ENCODE measurements at regions of chr6 and their contacts with region 1.

Region 1: GRCh38 chr6:17971128-17972073 is 16.0 kb downstream of the KIF13A start:
- DNase-seq: no peak
- ATAC-seq: no peak
- H3K4me3 ChIP-seq: no peak overlapping the region
- H3K27ac ChIP-seq: peak overlapping the region; percentile 6 to 53 (median 22)
- H3K4me1 ChIP-seq: peaks cover 72 to 76% of the 10 kb centered on the region in 2 donors
- H3K27me3 ChIP-seq: no peaks in the 10 kb centered on the region
- CTCF ChIP-seq: no peak
- POLR2A ChIP-seq: no peak

Region 2: GRCh38 chr6:17167327-17167979 is 803.9 kb before region 1 on chr6:
- in situ Hi-C with region 1: no loop called
- intact Hi-C with region 1: no loop called
- DNase-seq: peak; percentile 35 to 81
- ATAC-seq: peak; percentile 43 to 75
- H3K4me3 ChIP-seq: no peak overlapping the region
- H3K27ac ChIP-seq: peak overlapping the region; percentile 80 to 92 (median 90)
- H3K4me1 ChIP-seq: peaks cover 26 to 27% of the 10 kb centered on the region in 2 donors
- H3K27me3 ChIP-seq: no peaks in the 10 kb centered on the region
- CTCF ChIP-seq: peak; percentile 51 to 72 (median 60)
- POLR2A ChIP-seq: peak in 1 of 2 donors; percentile 11

Region 3: GRCh38 chr6:17851001-17851719 is 120.2 kb before region 1 on chr6:
- in situ Hi-C with region 1: loop called in 2 of 4 experiments (anchors 10 to 25 kb)
- intact Hi-C with region 1: no loop called
- DNase-seq: no peak
- ATAC-seq: no peak
- H3K4me3 ChIP-seq: no peak overlapping the region
- H3K27ac ChIP-seq: no peak overlapping the region
- H3K4me1 ChIP-seq: no peaks in the 10 kb centered on the region
- H3K27me3 ChIP-seq: no peaks in the 10 kb centered on the region
- CTCF ChIP-seq: no peak
- POLR2A ChIP-seq: no peak

Region 4: DNA sequence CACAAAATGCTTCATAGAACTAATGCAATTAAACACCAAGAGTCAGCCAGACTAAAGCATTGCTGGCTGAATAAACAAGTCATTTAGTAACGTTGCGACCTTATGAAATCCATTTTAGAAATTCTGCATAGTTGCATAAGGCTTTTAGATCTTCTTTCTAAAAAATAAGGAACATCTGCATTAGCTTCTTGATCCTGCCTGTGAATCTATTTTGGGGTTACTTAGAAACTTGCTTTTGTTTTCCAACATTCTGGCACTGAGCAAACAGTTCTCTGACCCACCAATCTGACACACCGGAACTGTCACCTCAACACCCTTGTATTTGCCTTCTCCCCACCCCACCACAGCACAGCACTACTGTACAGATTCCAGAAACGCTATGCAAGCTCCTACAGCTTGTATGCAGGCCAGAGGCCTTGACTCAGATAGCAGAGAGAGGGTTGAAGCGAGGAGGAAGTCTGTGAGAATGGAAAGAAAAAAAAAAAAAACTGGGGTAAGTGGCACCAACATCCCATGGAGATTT is 39.0 kb before region 1 on chr6:
- in situ Hi-C with region 1: no loop called
- intact Hi-C with region 1: loop called (anchors 5 kb)
- DNase-seq: peak in 1 of 2 donors; percentile 33
- ATAC-seq: peak; percentile 40 to 45
- H3K4me3 ChIP-seq: no peak overlapping the region
- H3K27ac ChIP-seq: peak overlapping the region; percentile 72 to 79 (median 76)
- H3K4me1 ChIP-seq: peaks cover 75 to 98% of the 10 kb centered on the region in 2 donors
- H3K27me3 ChIP-seq: no peaks in the 10 kb centered on the region
- CTCF ChIP-seq: no peak
- POLR2A ChIP-seq: no peak

Region 5: DNA sequence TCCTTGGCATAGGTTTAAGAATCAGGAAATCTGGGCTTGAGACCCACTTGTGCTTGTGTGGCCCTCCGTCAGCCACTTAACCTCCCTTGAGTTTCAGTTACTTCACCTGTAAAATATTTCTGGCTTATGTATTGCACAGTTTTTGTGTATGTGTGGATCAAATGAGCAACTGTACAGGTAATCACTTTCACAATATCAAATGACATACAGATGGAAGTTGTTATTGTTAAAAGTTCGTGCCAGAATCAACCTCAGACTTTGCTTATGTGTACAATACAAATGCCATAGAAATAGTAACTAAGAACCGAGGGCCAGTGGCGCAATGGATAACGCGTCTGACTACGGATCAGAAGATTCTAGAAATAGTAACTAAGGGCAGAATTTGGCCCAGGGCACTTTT is 81.7 kb after region 1 on chr6:
- in situ Hi-C with region 1: no loop called
- intact Hi-C with region 1: no loop called
- DNase-seq: no peak
- ATAC-seq: no peak
- H3K4me3 ChIP-seq: no peak overlapping the region
- H3K27ac ChIP-seq: no peak overlapping the region
- H3K4me1 ChIP-seq: no peaks in the 10 kb centered on the region
- H3K27me3 ChIP-seq: no peaks in the 10 kb centered on the region
- CTCF ChIP-seq: no peak
- POLR2A ChIP-seq: no peak

Measured in gastrocnemius medialis (tissue), 4 donors.